Activated CD4-positive, alpha-beta memory T cell treated with anti-CD3 and anti-CD28 coated beads, Interleukin-2, amount 10 ng/mL, durations not matched to agents 7 days and 5 days (primary cell): ENCODE measurements at regions of chr3 and their contacts with region 1.

Region 1: DNA sequence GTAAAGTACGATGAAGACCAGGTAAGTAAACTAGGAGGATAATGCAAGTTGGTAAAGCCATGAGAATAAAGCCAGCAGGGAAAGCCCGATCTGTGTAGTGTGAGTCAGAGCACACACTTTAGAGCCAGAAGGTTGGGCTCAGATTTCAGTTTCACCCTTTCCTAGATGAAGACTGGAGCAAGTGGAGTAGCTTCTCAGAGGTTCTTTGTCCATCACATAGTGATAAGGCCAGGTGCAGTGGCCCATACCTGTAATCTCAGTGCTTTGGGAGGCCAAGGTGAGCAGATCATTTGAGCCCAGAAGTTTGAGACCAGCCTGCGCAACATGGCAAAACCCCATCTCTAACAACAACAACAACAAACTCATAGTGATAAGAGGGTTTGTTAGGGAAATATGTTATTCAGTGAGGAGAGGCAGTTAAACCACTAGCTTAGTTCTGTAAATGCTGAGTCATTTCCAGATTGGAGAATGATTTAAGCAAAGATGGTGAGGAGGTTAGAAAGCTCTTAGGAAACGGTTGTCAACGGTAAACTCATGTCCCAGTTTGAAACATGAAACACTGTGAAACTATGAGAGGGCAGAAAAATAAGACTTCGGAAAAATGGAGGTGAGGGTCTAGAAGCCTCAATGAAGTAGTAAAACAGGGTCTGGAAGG is 39.0 kb downstream of the IL12A start:
- DNase-seq: peak; percentile 38
- H3K4me3 Mint-ChIP-seq: peak overlapping the region; percentile 19
- H3K27ac Mint-ChIP-seq: peak overlapping the region; percentile 89
- H3K4me1 Mint-ChIP-seq: peaks cover 38% of the 10 kb centered on the region
- H3K27me3 Mint-ChIP-seq: no peaks in the 10 kb centered on the region

Region 2: DNA sequence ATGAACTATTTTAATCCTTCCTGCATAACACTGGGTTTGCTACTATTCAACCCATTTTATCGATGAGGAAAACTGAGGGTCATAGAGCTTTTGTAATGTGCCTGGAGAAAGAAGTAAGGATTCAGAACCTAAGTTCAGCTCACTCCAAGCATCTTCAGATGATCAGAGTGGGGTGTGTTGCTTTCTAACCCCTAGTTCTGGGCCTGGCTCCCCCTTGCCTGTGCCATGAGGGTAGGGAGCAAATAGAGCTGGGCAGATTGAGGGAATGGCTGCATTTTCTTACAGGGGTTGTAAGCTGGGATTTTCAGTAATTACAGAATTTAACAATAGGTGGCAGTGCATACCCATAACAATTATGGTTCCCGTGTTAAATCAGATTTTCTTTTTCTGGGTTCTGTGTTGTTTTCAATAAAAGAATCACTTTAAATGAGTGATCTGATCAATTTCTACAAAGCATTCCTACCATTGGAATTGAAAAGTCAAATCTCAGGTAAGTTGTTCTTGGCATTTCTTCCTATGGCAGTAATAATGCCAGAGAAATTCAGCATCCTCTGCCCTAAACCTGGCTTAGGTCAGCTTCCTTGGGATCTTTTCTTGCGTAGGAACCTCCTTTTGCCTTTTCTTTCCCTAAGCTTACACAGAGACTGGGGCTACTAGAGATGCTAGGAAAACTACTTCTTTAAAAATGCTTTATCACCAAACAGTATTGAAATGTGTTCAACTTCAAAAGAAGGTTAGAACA is 142.8 kb before region 1 on chr3:
- CTCF ChIA-PET with region 1: interaction called, 11 read pairs
- POLR2A ChIA-PET with region 1: no interaction called
- DNase-seq: no peak
- H3K4me3 Mint-ChIP-seq: no peak overlapping the region
- H3K27ac Mint-ChIP-seq: no peak overlapping the region
- H3K4me1 Mint-ChIP-seq: no peaks in the 10 kb centered on the region
- H3K27me3 Mint-ChIP-seq: peaks cover 27% of the 10 kb centered on the region

Region 3: GRCh38 chr3:160003520-160004128 is 24.0 kb before region 1 on chr3:
- CTCF ChIA-PET with region 1: interaction called, 26 read pairs
- POLR2A ChIA-PET with region 1: interaction called, 9 read pairs
- DNase-seq: peak; percentile 53
- H3K4me3 Mint-ChIP-seq: no peak overlapping the region
- H3K27ac Mint-ChIP-seq: no peak overlapping the region
- H3K4me1 Mint-ChIP-seq: peaks cover 13% of the 10 kb centered on the region
- H3K27me3 Mint-ChIP-seq: no peaks in the 10 kb centered on the region

Region 4: GRCh38 chr3:160012108-160012507 is 15.6 kb before region 1 on chr3:
- CTCF ChIA-PET with region 1: interaction called, 26 read pairs
- POLR2A ChIA-PET with region 1: interaction called, 20 read pairs
- DNase-seq: no peak
- H3K4me3 Mint-ChIP-seq: no peak overlapping the region
- H3K27ac Mint-ChIP-seq: peak overlapping the region; percentile 64
- H3K4me1 Mint-ChIP-seq: peaks cover 53% of the 10 kb centered on the region
- H3K27me3 Mint-ChIP-seq: no peaks in the 10 kb centered on the region

Region 5: GRCh38 chr3:160399125-160400029 is 371.7 kb after region 1 on chr3 and contains the starts of genes IFT80 and SMC4:
- CTCF ChIA-PET with region 1: no interaction called
- POLR2A ChIA-PET with region 1: interaction called, 10 read pairs
- DNase-seq: peak; percentile 97
- H3K4me3 Mint-ChIP-seq: peak within 1 kb of the TSS; percentile 94
- H3K27ac Mint-ChIP-seq: peak within 1 kb of the TSS; percentile 89
- H3K4me1 Mint-ChIP-seq: peaks cover 44% of the 10 kb centered on the region
- H3K27me3 Mint-ChIP-seq: no peaks in the 10 kb centered on the region
- total RNA-seq, gene IFT80: 22.8 to 25.9 TPM
- total RNA-seq, gene SMC4: 217 to 222 TPM